ENCODE measurements at regions of chrX and their contacts with region 1.

Region 1: GRCh38 chrX:10119399-10119990 is 37.3 kb upstream of the CLCN4 start:
- DNase-seq: peak; percentile 34 to 92
- ATAC-seq: peak; percentile 61 to 78
- H3K4me3 ChIP-seq: no peak overlapping the region
- H3K27ac ChIP-seq: peak overlapping the region; percentile 54 to 67; a peak in 5 of 6 replicates
- H3K4me1 ChIP-seq: no peaks in the 10 kb centered on the region
- CTCF ChIP-seq: peak; percentile 100
- EP300 ChIP-seq: no peak
- POLR2A ChIP-seq: no peak
- RAD21 ChIP-seq: peak; percentile 100

Region 2: GRCh38 chrX:9595131-9595530 is 524.4 kb before region 1 on chrX:
- CTCF ChIA-PET with region 1: no interaction called
- POLR2A ChIA-PET with region 1: no interaction called
- DNase-seq: no peak
- ATAC-seq: no peak
- H3K4me3 ChIP-seq: no peak overlapping the region
- H3K27ac ChIP-seq: no peak overlapping the region
- H3K4me1 ChIP-seq: no peaks in the 10 kb centered on the region
- CTCF ChIP-seq: no peak
- EP300 ChIP-seq: no peak
- POLR2A ChIP-seq: no peak
- RAD21 ChIP-seq: no peak

Region 3: DNA sequence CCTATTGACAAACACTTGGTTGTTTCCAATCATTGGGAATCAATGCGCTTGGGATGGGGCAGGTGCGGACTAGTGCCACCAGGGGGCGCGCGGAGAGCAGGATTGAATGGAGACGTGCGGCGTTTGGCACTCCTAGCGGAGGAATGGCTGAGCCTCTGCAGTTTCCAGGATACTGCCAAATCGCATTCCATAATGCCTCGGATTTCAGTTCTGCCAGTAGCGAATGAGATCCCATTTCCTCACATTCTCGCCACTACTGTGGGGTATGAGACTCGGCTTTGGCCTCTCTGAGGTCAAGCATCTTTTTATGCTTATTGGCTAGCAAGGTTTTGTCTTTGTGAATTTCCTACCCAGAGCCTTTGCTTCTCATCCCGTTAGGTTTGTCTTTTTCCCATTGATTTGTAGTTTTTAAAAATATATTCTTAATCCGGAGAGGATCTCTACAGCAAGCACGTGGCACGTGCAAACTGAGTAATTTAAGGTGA is 123.6 kb before region 1 on chrX:
- CTCF ChIA-PET with region 1: interaction called, 216 read pairs
- POLR2A ChIA-PET with region 1: no interaction called
- DNase-seq: peak; percentile 68 to 88
- ATAC-seq: peak; percentile 74 to 97
- H3K4me3 ChIP-seq: no peak overlapping the region
- H3K27ac ChIP-seq: peak overlapping the region; percentile 52 to 73; a peak in 5 of 6 replicates
- H3K4me1 ChIP-seq: no peaks in the 10 kb centered on the region
- CTCF ChIP-seq: peak; percentile 94
- EP300 ChIP-seq: no peak
- POLR2A ChIP-seq: no peak
- RAD21 ChIP-seq: peak; percentile 98 to 99

Region 4: GRCh38 chrX:10014462-10015356 is 104.8 kb before region 1 on chrX:
- CTCF ChIA-PET with region 1: interaction called, 20 read pairs
- POLR2A ChIA-PET with region 1: no interaction called
- DNase-seq: peak; percentile 55 to 94
- ATAC-seq: peak; percentile 77 to 80
- H3K4me3 ChIP-seq: peak overlapping the region; percentile 96
- H3K27ac ChIP-seq: peak overlapping the region; percentile 100
- H3K4me1 ChIP-seq: peaks cover 47% of the 10 kb centered on the region
- CTCF ChIP-seq: no peak
- EP300 ChIP-seq: no peak
- POLR2A ChIP-seq: peak; percentile 25; the same call in 1 of the 2 replicates
- RAD21 ChIP-seq: no peak; a peak in 1 of 5 replicates

Region 5: GRCh38 chrX:10039821-10040793 is 79.4 kb before region 1 on chrX:
- CTCF ChIA-PET with region 1: interaction called, 24 read pairs
- POLR2A ChIA-PET with region 1: no interaction called
- DNase-seq: peak in 1 of 2 experiments; percentile 56
- ATAC-seq: peak; percentile 70 to 73
- H3K4me3 ChIP-seq: no peak overlapping the region
- H3K27ac ChIP-seq: peak overlapping the region; percentile 87 to 91
- H3K4me1 ChIP-seq: peaks cover 81% of the 10 kb centered on the region
- CTCF ChIP-seq: no peak
- EP300 ChIP-seq: peak; percentile 27 to 37; a peak in 2 of 5 replicates
- POLR2A ChIP-seq: no peak
- RAD21 ChIP-seq: no peak; a peak in 1 of 5 replicates

Region 6: DNA sequence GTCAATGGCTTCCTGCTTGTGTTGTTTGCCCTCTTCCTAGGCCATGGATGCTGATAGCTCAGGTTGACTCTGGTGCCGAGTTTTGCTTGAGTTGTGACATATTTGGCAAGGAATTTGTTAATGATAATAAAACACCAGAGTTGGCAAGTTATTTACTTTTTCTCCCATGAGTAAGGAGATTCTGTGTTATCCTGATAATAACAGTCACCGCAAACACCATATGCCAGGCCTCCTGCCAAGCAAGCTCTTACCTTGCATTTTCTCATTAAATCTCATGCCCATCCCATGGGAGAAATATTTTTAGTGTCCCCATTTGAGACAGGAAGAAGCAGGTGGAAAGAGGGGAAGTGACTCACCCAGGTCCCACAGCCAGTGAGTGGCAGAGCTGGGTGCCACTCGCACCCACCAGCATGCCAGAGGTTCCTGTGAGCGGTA is 30.1 kb before region 1 on chrX:
- CTCF ChIA-PET with region 1: interaction called, 33 read pairs
- POLR2A ChIA-PET with region 1: no interaction called
- DNase-seq: peak in 1 of 2 experiments; percentile 36
- ATAC-seq: no peak; a peak in 2 of 6 replicates
- H3K4me3 ChIP-seq: no peak overlapping the region
- H3K27ac ChIP-seq: peak overlapping the region; percentile 53 to 70; a peak in 4 of 6 replicates
- H3K4me1 ChIP-seq: peaks cover 21% of the 10 kb centered on the region
- CTCF ChIP-seq: no peak
- EP300 ChIP-seq: no peak
- POLR2A ChIP-seq: no peak
- RAD21 ChIP-seq: no peak

Region 7: GRCh38 chrX:10142041-10142599 is 22.6 kb after region 1 on chrX:
- CTCF ChIA-PET with region 1: interaction called, 26 read pairs
- POLR2A ChIA-PET with region 1: no interaction called
- DNase-seq: no peak
- ATAC-seq: no peak
- H3K4me3 ChIP-seq: no peak overlapping the region
- H3K27ac ChIP-seq: no peak overlapping the region
- H3K4me1 ChIP-seq: no peaks in the 10 kb centered on the region
- CTCF ChIP-seq: no peak
- EP300 ChIP-seq: no peak
- POLR2A ChIP-seq: no peak
- RAD21 ChIP-seq: no peak

Region 8: DNA sequence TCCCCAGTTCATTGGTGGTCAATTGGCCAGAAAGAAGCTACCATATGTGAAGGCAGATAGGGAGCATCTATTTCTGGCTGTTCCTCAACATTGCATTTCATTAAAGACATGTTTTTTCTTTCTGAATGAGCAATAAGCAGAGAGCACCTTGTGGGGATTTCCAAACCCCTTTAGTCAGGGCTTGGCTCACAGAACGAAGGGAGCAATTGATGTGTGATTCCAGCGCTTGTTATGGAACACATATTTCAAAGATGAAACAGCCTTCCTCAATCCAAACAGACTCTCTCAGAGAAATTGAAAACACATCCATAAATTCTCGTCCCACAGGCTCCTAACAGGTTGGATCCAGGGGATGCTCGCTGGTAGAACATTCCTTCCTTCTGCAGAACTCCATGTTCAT is 121.4 kb after region 1 on chrX:
- CTCF ChIA-PET with region 1: no interaction called
- POLR2A ChIA-PET with region 1: interaction called, 11 read pairs
- DNase-seq: peak in 1 of 2 experiments; percentile 12
- ATAC-seq: peak in 1 of 2 experiments; percentile 56; a peak in 3 of 6 replicates
- H3K4me3 ChIP-seq: no peak overlapping the region
- H3K27ac ChIP-seq: peak overlapping the region in 1 of 2 experiments; percentile 78; a peak in 3 of 6 replicates
- H3K4me1 ChIP-seq: peaks cover 21% of the 10 kb centered on the region
- CTCF ChIP-seq: no peak
- EP300 ChIP-seq: no peak
- POLR2A ChIP-seq: no peak
- RAD21 ChIP-seq: no peak

Region 9: GRCh38 chrX:10697616-10698317 is 578.3 kb after region 1 on chrX:
- CTCF ChIA-PET with region 1: no interaction called
- POLR2A ChIA-PET with region 1: no interaction called
- DNase-seq: no peak
- ATAC-seq: no peak
- H3K4me3 ChIP-seq: no peak overlapping the region
- H3K27ac ChIP-seq: no peak overlapping the region
- H3K4me1 ChIP-seq: no peaks in the 10 kb centered on the region
- CTCF ChIP-seq: no peak
- EP300 ChIP-seq: no peak
- POLR2A ChIP-seq: no peak
- RAD21 ChIP-seq: no peak

Measured in A549 (cell line).